ENCODE measurements at regions of chr2 and their contacts with region 1.

Region 1: DNA sequence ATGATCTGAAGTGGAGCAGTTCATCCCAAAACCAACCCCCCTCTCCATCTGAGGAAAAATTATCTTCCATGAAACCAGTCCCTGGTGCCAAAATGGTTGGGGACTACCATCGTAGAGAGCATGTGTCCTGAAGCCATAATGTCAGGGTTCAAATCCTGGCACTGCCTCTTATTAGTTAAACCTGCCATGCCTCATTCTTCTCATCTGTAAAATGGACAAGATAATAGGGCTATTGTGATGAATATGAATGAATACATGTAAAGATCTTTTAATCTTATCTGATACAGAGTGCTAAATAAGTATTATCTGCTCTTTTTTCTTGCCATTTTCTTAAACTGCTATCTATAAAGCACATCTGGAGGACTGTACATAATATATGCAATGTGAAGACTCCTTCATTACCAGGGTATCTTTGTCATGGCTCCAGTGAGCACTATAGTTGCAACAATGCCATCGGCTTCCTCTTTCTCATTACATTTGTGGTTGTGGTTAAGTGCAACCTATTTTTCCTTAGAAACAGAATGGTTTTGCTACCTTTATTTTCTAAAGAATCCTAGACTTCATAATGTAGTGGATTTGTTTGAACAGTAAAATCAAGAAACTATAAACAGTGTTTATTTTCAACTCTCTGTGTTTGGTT is 27.0 kb downstream of the MFSD6 start:
- DNase-seq: peak in 2 of 3 donors; percentile 83 to 89
- H3K4me3 ChIP-seq: no peak overlapping the region
- H3K27ac ChIP-seq: no peak overlapping the region
- H3K4me1 ChIP-seq: peaks cover 4 to 45% (median 25%) of the 10 kb centered on the region in 4 experiments
- H3K27me3 ChIP-seq: no peaks in the 10 kb centered on the region

Region 2: DNA sequence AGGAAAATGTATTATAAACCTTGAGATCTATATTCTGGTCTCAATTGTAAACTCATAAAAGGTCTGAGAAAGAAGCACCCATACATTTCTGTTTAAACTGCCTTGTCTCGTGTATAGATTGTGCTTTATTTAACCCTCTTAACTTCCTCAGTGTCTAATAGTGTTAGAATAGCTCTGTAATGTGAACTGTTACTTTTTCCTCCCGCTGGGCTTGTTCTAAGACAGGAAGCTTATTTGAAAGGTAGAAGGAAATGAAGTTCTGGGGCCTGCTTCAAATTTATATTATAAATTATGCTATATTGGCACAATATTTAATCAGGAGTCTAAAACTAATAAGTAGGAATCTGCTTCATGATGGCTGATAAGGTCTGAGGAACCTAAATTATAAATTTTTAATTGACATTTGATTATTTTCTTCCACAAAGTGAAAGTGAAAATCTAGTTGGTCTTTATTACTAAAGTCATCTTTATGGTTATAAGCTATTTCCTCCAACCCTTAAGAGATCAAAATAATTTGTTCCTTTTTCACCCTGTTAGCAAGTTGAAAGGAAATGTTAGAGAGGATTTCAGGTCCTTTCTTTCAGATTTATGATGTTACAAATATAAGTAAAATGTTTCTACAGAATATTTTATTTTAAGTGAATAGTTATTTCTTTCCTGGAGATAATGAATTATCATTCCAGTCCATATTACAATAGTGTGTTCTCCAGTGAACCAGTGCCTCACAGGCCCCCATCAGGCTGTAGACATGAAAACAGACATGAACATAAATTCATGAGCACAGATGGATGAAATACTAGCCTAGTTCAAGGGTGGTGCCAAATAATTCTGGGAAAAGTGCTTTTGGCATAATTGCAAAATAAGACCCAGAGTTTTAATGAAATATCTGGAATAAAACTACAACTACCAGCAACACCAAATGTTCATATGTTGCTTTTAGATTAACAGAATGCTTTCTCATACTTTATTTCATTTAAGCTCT is 19.1 kb before region 1 on chr2:
- CTCF ChIA-PET with region 1: no interaction called
- POLR2A ChIA-PET with region 1: no interaction called
- DNase-seq: peak in 2 of 3 donors; percentile 51 to 58
- H3K4me3 ChIP-seq: peak overlapping the region in 4 of 7 experiments; percentile 39 to 61 (median 48)
- H3K27ac ChIP-seq: peak overlapping the region; percentile 74 to 82
- H3K4me1 ChIP-seq: peaks cover 3 to 45% (median 31%) of the 10 kb centered on the region in 4 experiments
- H3K27me3 ChIP-seq: no peaks in the 10 kb centered on the region

Region 3: GRCh38 chr2:190446750-190447516 is 11.8 kb after region 1 on chr2:
- CTCF ChIA-PET with region 1: interaction called, 12 read pairs
- POLR2A ChIA-PET with region 1: no interaction called
- DNase-seq: no peak
- H3K4me3 ChIP-seq: no peak overlapping the region
- H3K27ac ChIP-seq: no peak overlapping the region
- H3K4me1 ChIP-seq: peaks cover 0 to 4% (median 0%) of the 10 kb centered on the region in 4 experiments
- H3K27me3 ChIP-seq: no peaks in the 10 kb centered on the region